Psoas muscle (tissue), 8 donors: ENCODE measurements at regions of chr1 and their contacts with region 1.

Region 1: GRCh38 chr1:179910934-179911333 is 28.8 kb downstream of the TOR1AIP1 start:
- DNase-seq: no peak
- ATAC-seq: peak; percentile 39 to 85 (median 62)
- H3K4me3 ChIP-seq: no peak overlapping the region
- H3K27ac ChIP-seq: peak overlapping the region; percentile 7
- H3K4me1 ChIP-seq: peaks cover 10% of the 10 kb centered on the region
- H3K27me3 ChIP-seq: no peaks in the 10 kb centered on the region
- CTCF ChIP-seq: no peak

Region 2: GRCh38 chr1:180033390-180033789 is 122.5 kb after region 1 on chr1:
- intact Hi-C with region 1: loop called in 1 of 2 experiments (anchors 5 kb)
- DNase-seq: no peak
- ATAC-seq: no peak
- H3K4me3 ChIP-seq: no peak overlapping the region
- H3K27ac ChIP-seq: no peak overlapping the region
- H3K4me1 ChIP-seq: no peaks in the 10 kb centered on the region
- H3K27me3 ChIP-seq: no peaks in the 10 kb centered on the region
- CTCF ChIP-seq: no peak

Region 3: GRCh38 chr1:180070286-180070685 is 159.4 kb after region 1 on chr1:
- intact Hi-C with region 1: loop called in 1 of 2 experiments (anchors 10 kb)
- DNase-seq: no peak
- ATAC-seq: no peak
- H3K4me3 ChIP-seq: no peak overlapping the region
- H3K27ac ChIP-seq: no peak overlapping the region
- H3K4me1 ChIP-seq: no peaks in the 10 kb centered on the region
- H3K27me3 ChIP-seq: no peaks in the 10 kb centered on the region
- CTCF ChIP-seq: no peak